MCF 10A (cell line): ENCODE measurements at regions of chr11 and their contacts with region 1.

Region 1: DNA sequence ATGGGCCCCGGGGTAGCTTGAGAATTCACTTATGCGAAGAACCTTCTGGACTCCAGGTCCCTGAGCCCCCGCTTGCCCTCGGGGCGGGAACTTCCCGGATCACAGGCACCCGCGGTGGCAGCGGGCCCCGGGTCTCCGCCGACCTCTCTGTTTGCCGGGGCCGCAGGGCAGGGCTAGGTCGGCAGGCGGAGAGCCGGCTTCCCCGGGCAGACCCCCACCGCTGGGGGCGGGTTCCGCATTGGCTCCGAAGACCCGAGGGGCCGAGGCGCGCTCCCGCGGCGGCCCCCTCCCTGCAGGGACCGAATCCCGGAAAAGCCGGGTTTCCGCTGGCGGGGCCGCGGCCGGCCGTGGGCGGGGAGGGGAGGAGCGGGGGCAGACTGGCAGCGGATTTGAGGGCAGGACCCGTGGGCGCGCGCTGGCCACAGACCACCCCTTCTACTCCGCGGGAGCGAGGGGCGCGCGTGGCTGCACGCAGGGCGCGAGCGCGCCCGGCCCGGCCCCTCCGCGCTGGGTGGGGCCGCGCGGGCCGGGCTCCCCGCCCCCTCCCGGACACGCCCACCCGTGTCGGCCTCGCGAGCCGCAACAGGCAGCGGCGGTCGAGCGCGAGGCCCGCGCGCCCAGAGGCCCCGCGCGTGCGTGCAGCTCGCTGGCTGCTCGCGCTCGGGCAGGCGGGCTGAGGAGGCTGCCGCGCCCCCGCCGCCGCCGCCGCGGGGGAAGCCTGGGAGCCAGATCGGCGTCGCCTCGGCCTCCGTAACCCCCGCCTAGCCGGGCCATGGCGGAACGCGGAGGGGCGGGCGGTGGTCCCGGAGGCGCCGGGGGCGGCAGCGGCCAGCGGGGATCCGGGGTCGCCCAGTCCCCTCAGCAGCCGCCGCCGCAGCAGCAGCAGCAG is at the start of gene PACS1:
- DNase-seq: peak; percentile 47
- H3K4me3 Mint-ChIP-seq: peak within 1 kb of the TSS; percentile 86
- H3K27ac Mint-ChIP-seq: peak within 1 kb of the TSS; percentile 83
- H3K4me1 Mint-ChIP-seq: peaks cover 40% of the 10 kb centered on the region
- H3K27me3 Mint-ChIP-seq: no peaks in the 10 kb centered on the region
- CTCF ChIP-seq: no peak
- total RNA-seq, gene PACS1: 32.2 and 33.5 TPM in 2 replicates

Region 2: GRCh38 chr11:66051766-66052663 is 17.9 kb before region 1 on chr11 and contains the start of gene SF3B2:
- CTCF ChIA-PET with region 1: interaction called, 75 read pairs
- POLR2A ChIA-PET with region 1: interaction called, 69 read pairs
- intact Hi-C with region 1: no loop called
- DNase-seq: peak; percentile 98
- H3K4me3 Mint-ChIP-seq: peak within 1 kb of the TSS; percentile 97
- H3K27ac Mint-ChIP-seq: peak within 1 kb of the TSS; percentile 91
- H3K4me1 Mint-ChIP-seq: peaks cover 5% of the 10 kb centered on the region
- H3K27me3 Mint-ChIP-seq: no peaks in the 10 kb centered on the region
- CTCF ChIP-seq: no peak
- total RNA-seq, gene SF3B2: 241 and 317 TPM in 2 replicates

Region 3: GRCh38 chr11:66081505-66081904 is 11.5 kb after region 1 on chr11:
- CTCF ChIA-PET with region 1: interaction called, 20 read pairs
- POLR2A ChIA-PET with region 1: interaction called, 22 read pairs
- intact Hi-C with region 1: no loop called
- DNase-seq: peak; percentile 62
- H3K4me3 Mint-ChIP-seq: peak overlapping the region; percentile 35
- H3K27ac Mint-ChIP-seq: peak overlapping the region; percentile 87
- H3K4me1 Mint-ChIP-seq: peaks cover 44% of the 10 kb centered on the region
- H3K27me3 Mint-ChIP-seq: no peaks in the 10 kb centered on the region
- CTCF ChIP-seq: no peak

Region 4: GRCh38 chr11:66119348-66120133 is 49.6 kb after region 1 on chr11:
- CTCF ChIA-PET with region 1: interaction called, 12 read pairs
- POLR2A ChIA-PET with region 1: interaction called, 8 read pairs
- intact Hi-C with region 1: no loop called
- DNase-seq: peak; percentile 54
- H3K4me3 Mint-ChIP-seq: no peak overlapping the region
- H3K27ac Mint-ChIP-seq: peak overlapping the region; percentile 92
- H3K4me1 Mint-ChIP-seq: peaks cover 23% of the 10 kb centered on the region
- H3K27me3 Mint-ChIP-seq: no peaks in the 10 kb centered on the region
- CTCF ChIP-seq: no peak

Region 5: GRCh38 chr11:66136752-66137123 is 66.8 kb after region 1 on chr11:
- CTCF ChIA-PET with region 1: interaction called, 16 read pairs
- POLR2A ChIA-PET with region 1: interaction called, 6 read pairs
- intact Hi-C with region 1: loop called (anchors 1 kb)
- DNase-seq: peak; percentile 55
- H3K4me3 Mint-ChIP-seq: no peak overlapping the region
- H3K27ac Mint-ChIP-seq: no peak overlapping the region
- H3K4me1 Mint-ChIP-seq: peaks cover 22% of the 10 kb centered on the region
- H3K27me3 Mint-ChIP-seq: no peaks in the 10 kb centered on the region
- CTCF ChIP-seq: no peak

Region 6: DNA sequence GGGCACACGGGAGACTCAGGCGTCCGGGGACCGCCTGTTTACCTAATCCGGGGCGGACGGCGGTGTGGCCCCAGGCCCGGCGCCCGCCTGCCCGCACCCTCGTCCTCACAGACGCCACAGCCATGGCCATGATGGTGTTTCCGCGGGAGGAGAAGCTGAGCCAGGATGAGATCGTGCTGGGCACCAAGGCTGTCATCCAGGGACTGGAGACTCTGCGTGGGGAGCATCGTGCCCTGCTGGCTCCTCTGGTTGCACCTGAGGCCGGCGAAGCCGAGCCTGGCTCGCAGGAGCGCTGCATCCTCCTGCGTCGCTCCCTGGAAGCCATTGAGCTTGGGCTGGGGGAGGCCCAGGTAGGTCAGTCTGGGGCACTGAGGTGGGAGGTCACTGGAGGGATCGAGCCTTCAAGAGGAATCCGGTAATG is 188.5 kb after region 1 on chr11:
- CTCF ChIA-PET with region 1: interaction called, 4 read pairs
- POLR2A ChIA-PET with region 1: no interaction called
- intact Hi-C with region 1: loop called (anchors 1 kb)
- DNase-seq: no peak
- H3K4me3 Mint-ChIP-seq: peak overlapping the region; percentile 79
- H3K27ac Mint-ChIP-seq: peak overlapping the region; percentile 81
- H3K4me1 Mint-ChIP-seq: peaks cover 12% of the 10 kb centered on the region
- H3K27me3 Mint-ChIP-seq: no peaks in the 10 kb centered on the region
- CTCF ChIP-seq: no peak

Region 7: DNA sequence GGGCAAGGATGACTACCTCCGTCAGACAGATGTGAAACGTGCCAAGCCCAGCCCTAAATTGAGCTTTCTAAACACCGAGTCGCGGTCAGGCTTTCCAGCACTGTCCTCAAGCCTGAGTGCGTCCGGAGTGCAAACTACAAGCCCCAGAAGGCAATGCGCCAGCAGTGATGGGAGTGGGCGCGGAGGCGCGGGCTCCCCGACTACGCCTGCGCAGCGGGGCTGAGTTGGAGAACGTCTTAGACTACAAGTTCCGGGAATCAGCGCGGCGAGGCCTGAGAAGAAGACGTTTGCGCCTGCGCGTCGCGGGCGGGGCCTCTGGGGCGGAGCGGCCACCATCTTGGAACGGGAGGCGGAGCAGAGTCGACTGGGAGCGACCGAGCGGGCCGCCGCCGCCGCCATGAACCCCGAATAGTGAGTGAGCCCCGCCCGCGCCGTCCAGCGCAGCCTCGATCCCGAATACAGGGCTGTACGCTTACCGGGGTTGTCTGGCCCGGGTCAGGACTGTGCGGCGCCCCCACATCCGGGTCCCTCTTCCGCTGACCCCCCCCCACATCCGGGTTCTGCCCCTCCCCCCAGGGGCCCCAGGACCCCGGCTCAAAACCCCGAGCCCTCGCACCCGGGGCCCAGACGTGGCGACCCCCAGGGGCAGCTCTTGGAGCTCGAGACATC is 198.5 kb after region 1 on chr11 and contains the start of gene RAB1B:
- CTCF ChIA-PET with region 1: interaction called, 4 read pairs
- POLR2A ChIA-PET with region 1: interaction called, 13 read pairs
- intact Hi-C with region 1: no loop called
- DNase-seq: peak; percentile 100
- H3K4me3 Mint-ChIP-seq: peak within 1 kb of the TSS; percentile 96
- H3K27ac Mint-ChIP-seq: peak within 1 kb of the TSS; percentile 91
- H3K4me1 Mint-ChIP-seq: peaks cover 2% of the 10 kb centered on the region
- H3K27me3 Mint-ChIP-seq: no peaks in the 10 kb centered on the region
- CTCF ChIP-seq: no peak
- total RNA-seq, gene RAB1B: 73.4 and 87.0 TPM in 2 replicates

Region 8: GRCh38 chr11:66408488-66409214 is 338.7 kb after region 1 on chr11:
- CTCF ChIA-PET with region 1: no interaction called
- POLR2A ChIA-PET with region 1: no interaction called
- intact Hi-C with region 1: no loop called
- DNase-seq: peak; percentile 83
- H3K4me3 Mint-ChIP-seq: peak overlapping the region; percentile 56
- H3K27ac Mint-ChIP-seq: no peak overlapping the region
- H3K4me1 Mint-ChIP-seq: no peaks in the 10 kb centered on the region
- H3K27me3 Mint-ChIP-seq: peaks cover 64% of the 10 kb centered on the region
- CTCF ChIP-seq: peak; percentile 100